Activated CD8-positive, alpha-beta T cell treated with anti-CD3 and anti-CD28 coated beads, Interleukin-2, amount 10 ng/mL, durations not matched to agents 7 days and 5 days (primary cell): ENCODE measurements at regions of chr3 and their contacts with region 1.

Region 1: GRCh38 chr3:151086484-151087456 is 1.3 kb downstream of the MED12L start:
- DNase-seq: peak; percentile 80
- ATAC-seq: peak; percentile 87
- H3K4me3 Mint-ChIP-seq: peak overlapping the region; percentile 80
- H3K27ac Mint-ChIP-seq: no peak overlapping the region
- H3K4me1 Mint-ChIP-seq: peaks cover 13% of the 10 kb centered on the region
- H3K27me3 Mint-ChIP-seq: peaks cover 52% of the 10 kb centered on the region

Region 2: DNA sequence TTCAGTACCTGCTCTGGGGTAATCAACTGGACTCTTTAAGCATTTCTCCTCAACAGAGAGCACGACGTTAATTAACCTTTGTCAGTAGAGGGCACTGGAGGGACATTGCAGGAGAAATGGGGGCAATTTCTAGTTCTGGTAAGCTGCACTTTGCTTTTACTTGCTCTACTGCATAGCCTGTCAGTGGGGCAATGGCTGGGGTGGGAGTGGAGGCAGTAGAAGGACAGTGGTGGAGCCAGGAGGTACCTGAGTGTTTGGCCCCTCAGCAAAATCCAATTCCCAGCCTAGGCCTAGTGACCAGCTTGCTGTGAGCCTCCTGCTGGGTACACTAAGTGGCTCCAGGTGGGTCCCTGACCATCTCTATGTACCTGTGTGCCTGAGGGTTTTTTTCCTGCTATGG is 19.6 kb before region 1 on chr3:
- CTCF ChIA-PET with region 1: interaction called, 20 read pairs
- POLR2A ChIA-PET with region 1: no interaction called
- DNase-seq: peak; percentile 37
- ATAC-seq: no peak
- H3K4me3 Mint-ChIP-seq: no peak overlapping the region
- H3K27ac Mint-ChIP-seq: no peak overlapping the region
- H3K4me1 Mint-ChIP-seq: no peaks in the 10 kb centered on the region
- H3K27me3 Mint-ChIP-seq: peaks cover 15% of the 10 kb centered on the region

Region 3: DNA sequence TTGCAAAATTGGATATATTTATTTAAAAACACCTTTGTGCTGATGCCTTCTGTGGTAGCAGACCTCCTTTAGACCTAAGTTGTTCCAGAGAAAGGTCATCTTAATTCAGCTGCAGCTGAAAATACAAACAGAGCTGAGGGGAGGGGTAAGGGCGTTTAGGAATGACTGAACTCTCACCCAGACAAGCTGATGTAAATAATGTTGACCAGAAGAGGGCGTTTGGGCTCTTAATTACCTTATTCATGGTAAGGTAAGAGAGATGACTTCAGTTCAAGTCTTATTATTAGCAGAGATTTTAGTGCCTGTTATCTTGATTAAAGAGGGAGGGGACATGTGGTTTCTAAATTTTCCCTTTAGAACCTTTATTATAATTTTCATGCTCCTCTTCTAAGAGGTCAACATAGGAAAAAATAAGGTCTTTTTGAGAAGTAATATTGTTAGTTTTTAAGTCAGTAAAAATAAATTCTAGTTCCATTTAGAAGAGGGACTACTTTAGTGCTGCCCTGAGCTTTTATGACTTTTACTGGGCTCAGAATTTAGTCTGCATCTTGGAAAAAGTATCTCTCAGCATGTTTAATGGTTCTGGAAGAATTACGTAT is 69.9 kb after region 1 on chr3:
- CTCF ChIA-PET with region 1: interaction called, 10 read pairs
- POLR2A ChIA-PET with region 1: no interaction called
- DNase-seq: peak; percentile 64
- ATAC-seq: peak; percentile 87
- H3K4me3 Mint-ChIP-seq: no peak overlapping the region
- H3K27ac Mint-ChIP-seq: no peak overlapping the region
- H3K4me1 Mint-ChIP-seq: no peaks in the 10 kb centered on the region
- H3K27me3 Mint-ChIP-seq: peaks cover 6% of the 10 kb centered on the region